Dorsolateral prefrontal cortex (tissue), 120 donors: ENCODE measurements at regions of chr1 and their contacts with region 1.

Region 1: GRCh38 chr1:109229531-109230127 is 15.9 kb downstream of the SARS1 start:
- DNase-seq: peak in 7 of 10 donors; percentile 18 to 65 (median 54)
- H3K4me3 ChIP-seq: peak overlapping the region in 5 of 59 donors; percentile 4 to 24 (median 7)
- H3K27ac ChIP-seq: peak overlapping the region in 55 of 59 donors; percentile 14 to 94 (median 79)
- H3K27me3 ChIP-seq: no peaks in the 10 kb centered on the region
- CTCF ChIP-seq: peak in 2 of 56 donors; percentile 6 to 20

Region 2: DNA sequence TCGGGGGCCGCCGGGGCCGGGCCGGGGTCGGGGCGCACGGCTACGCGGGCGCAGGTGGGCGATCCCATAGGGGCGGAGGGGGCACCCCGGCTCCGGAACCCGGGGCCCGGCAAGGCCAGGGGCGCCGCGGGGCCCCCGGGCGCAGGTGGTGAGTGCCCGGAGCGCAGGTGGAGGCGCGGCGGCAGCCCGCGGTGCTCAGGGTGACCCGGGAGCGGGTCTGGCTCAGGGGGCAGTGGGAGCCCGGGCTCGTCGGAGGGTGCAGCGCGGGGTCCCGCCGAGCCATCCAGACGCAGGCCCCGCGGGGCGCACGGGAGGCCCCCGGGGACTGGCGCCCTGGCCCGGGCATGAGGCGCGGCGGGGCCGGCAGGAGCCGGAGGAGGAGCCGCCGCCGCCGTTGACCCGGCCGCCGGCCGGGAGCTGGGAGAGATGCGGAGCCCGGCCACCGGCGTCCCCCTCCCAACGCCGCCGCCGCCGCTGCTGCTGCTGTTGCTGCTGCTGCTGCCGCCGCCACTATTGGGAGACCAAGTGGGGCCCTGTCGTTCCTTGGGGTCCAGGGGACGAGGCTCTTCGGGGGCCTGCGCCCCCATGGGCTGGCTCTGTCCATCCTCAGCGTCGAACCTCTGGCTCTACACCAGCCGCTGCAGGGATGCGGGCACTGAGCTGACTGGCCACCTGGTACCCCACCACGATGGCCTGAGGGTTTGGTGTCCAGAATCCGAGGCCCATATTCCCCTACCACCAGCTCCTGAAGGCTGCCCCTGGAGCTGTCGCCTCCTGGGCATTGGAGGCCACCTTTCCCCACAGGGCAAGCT is 20.2 kb after region 1 on chr1:
- intact Hi-C with region 1: loop called in 1 of 2 experiments (anchors 2 kb)
- DNase-seq: peak in 2 of 10 donors; percentile 38 to 45
- H3K4me3 ChIP-seq: peak overlapping the region; percentile 48 to 89 (median 68)
- H3K27ac ChIP-seq: peak overlapping the region in 54 of 59 donors; percentile 28 to 90 (median 73)
- H3K27me3 ChIP-seq: no peaks in the 10 kb centered on the region
- CTCF ChIP-seq: no peak